ENCODE measurements at regions of chr11 and their contacts with region 1.

Region 1: DNA sequence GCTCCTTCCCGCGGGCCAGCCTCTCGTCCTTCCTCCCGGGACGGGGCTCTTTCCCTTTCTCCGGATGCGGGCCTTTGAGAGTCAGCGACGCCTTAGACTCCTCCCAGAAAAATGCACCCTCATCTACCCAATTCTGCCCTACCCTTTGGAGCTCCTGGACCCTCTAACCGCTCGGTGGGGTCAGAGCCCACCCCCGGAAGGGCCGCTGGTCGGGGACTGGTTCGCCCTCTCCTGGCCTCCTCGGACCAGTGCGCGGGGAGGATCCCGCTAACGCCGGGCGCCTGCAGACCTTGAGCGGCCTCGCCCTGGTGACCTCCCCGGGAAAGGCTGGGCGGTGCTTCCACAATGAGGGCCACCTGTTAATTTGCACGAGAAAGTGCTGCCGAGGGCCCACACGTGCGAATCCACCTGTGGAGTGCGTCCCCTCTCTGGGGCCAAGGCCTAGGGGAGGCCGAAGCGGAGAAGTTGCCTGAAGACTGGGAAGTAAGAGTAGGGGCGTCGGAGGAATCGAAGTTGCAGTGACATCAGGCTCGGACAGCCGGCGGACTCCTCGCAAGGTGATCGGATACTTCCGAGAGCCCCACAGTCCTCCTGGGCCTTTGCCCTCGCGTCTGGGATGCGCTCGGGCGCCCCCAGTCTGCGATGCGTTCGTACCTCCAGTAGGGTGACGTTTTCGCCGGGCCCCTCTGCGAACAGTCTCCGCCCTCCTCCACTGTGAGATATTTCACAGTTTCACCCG is 61.5 kb downstream of the ENDOD1 start:
- DNase-seq: peak; percentile 95
- H3K4me3 Mint-ChIP-seq: peak overlapping the region; percentile 81
- H3K27ac Mint-ChIP-seq: peak overlapping the region; percentile 82
- H3K4me1 Mint-ChIP-seq: peaks cover 44% of the 10 kb centered on the region
- H3K27me3 Mint-ChIP-seq: no peaks in the 10 kb centered on the region
- CTCF ChIP-seq: peak; percentile 63

Region 2: GRCh38 chr11:95076416-95076815 is 74.7 kb before region 1 on chr11:
- CTCF ChIA-PET with region 1: interaction called, 60 read pairs
- POLR2A ChIA-PET with region 1: interaction called, 31 read pairs
- intact Hi-C with region 1: no loop called
- DNase-seq: peak; percentile 94
- H3K4me3 Mint-ChIP-seq: peak overlapping the region; percentile 25
- H3K27ac Mint-ChIP-seq: peak overlapping the region; percentile 68
- H3K4me1 Mint-ChIP-seq: peaks cover 39% of the 10 kb centered on the region
- H3K27me3 Mint-ChIP-seq: no peaks in the 10 kb centered on the region
- CTCF ChIP-seq: no peak

Region 3: DNA sequence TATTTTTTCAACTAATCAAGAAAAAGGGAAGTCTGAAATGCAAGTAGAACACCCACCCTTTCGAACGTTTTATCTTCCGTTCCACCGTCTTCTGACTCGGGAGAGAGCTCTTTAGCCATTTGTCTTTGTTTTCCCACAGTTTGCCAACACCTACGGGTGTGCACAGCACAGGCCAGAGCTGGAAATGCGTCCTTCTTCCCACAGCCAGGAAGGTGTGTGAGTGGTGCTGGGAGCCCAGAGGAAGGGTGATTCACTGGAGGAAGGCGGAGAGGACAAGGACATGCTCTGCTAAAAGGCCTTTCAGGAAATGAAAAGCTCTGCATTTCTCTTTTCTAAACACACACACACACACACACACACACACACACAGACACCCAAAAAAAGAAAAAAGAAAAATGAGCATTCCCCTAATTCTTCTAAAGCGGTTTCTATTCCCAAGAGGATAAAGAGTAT is 42.9 kb before region 1 on chr11:
- CTCF ChIA-PET with region 1: interaction called, 42 read pairs
- POLR2A ChIA-PET with region 1: interaction called, 83 read pairs
- intact Hi-C with region 1: loop called (anchors 2 kb)
- DNase-seq: peak; percentile 94
- H3K4me3 Mint-ChIP-seq: peak overlapping the region; percentile 75
- H3K27ac Mint-ChIP-seq: peak overlapping the region; percentile 98
- H3K4me1 Mint-ChIP-seq: peaks cover 38% of the 10 kb centered on the region
- H3K27me3 Mint-ChIP-seq: no peaks in the 10 kb centered on the region
- CTCF ChIP-seq: no peak

Region 4: DNA sequence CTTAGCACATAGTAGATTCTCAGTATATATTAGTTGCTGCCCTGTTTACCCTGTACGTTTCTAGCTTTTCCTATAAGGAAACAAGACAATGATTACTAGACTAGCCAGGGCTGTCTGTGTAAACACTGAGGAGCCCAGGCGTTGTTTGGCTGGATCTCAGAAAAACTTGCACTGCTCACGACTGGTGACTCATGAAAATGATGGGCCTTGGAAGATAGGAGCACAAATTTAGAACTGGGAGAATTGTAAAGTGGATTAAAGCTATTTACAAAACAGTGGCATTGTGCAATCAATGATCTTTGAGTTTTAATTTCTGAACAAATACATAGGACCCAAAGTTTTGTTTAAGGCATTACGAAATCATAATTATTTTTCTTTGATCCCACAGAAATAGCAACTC is 361.6 kb after region 1 on chr11:
- CTCF ChIA-PET with region 1: interaction called, 11 read pairs
- POLR2A ChIA-PET with region 1: interaction called, 3 read pairs
- intact Hi-C with region 1: no loop called
- DNase-seq: peak; percentile 86
- H3K4me3 Mint-ChIP-seq: peak overlapping the region; percentile 7
- H3K27ac Mint-ChIP-seq: peak overlapping the region; percentile 71
- H3K4me1 Mint-ChIP-seq: peaks cover 41% of the 10 kb centered on the region
- H3K27me3 Mint-ChIP-seq: no peaks in the 10 kb centered on the region
- CTCF ChIP-seq: no peak

Region 5: GRCh38 chr11:95705485-95706124 is 554.5 kb after region 1 on chr11:
- CTCF ChIA-PET with region 1: interaction called, 367 read pairs
- POLR2A ChIA-PET with region 1: interaction called, 16 read pairs
- intact Hi-C with region 1: loop called (anchors 1 kb)
- DNase-seq: peak; percentile 83
- H3K4me3 Mint-ChIP-seq: no peak overlapping the region
- H3K27ac Mint-ChIP-seq: no peak overlapping the region
- H3K4me1 Mint-ChIP-seq: peaks cover 6% of the 10 kb centered on the region
- H3K27me3 Mint-ChIP-seq: no peaks in the 10 kb centered on the region
- CTCF ChIP-seq: peak; percentile 96

Region 6: GRCh38 chr11:95835768-95836488 is 684.8 kb after region 1 on chr11:
- CTCF ChIA-PET with region 1: interaction called, 3 read pairs
- POLR2A ChIA-PET with region 1: no interaction called
- intact Hi-C with region 1: loop called (anchors 10 kb)
- DNase-seq: peak; percentile 89
- H3K4me3 Mint-ChIP-seq: no peak overlapping the region
- H3K27ac Mint-ChIP-seq: peak overlapping the region; percentile 17
- H3K4me1 Mint-ChIP-seq: peaks cover 11% of the 10 kb centered on the region
- H3K27me3 Mint-ChIP-seq: no peaks in the 10 kb centered on the region
- CTCF ChIP-seq: peak; percentile 72

Measured in MCF 10A (cell line).